Activated CD4-positive, alpha-beta T cell treated with anti-CD3 and anti-CD28 coated beads, Interleukin-2, amount 10 ng/mL, durations not matched to agents 24 days and 14 days (primary cell): ENCODE measurements at regions of chr7 and their contacts with region 1.

Region 1: GRCh38 chr7:92809397-92810241 is 26.8 kb downstream of the CDK6 start:
- DNase-seq: peak; percentile 91
- H3K4me3 Mint-ChIP-seq: peak overlapping the region; percentile 73
- H3K27ac Mint-ChIP-seq: peak overlapping the region; percentile 90
- H3K4me1 Mint-ChIP-seq: peaks cover 75% of the 10 kb centered on the region
- H3K27me3 Mint-ChIP-seq: no peaks in the 10 kb centered on the region

Region 2: DNA sequence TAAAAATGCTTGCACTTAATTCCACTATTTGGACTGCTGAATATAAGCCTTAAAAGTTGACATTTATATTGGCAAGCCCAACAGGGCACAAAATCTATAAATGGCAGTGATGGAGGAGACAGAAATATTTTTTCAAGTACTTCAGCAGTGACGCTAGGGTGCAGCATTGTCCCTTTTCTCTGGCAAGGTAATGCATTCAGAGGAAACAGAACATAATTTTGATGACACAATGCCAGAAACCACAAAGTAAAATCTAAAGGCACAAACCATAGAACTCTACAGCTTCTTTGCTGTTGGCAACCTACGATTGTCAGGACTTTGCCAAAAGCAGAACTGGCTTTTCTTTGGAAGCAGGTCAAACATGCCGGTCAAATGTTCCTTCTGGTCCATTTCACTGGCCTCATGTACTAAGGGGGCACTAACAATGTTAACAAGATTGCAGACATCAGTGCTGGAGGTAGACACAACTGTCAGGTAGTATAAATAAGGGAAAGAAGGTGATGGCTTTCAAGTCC is 188.5 kb before region 1 on chr7:
- intact Hi-C with region 1: loop called (anchors 1 kb)
- DNase-seq: peak; percentile 93
- H3K4me3 Mint-ChIP-seq: peak overlapping the region; percentile 71
- H3K27ac Mint-ChIP-seq: peak overlapping the region; percentile 95
- H3K4me1 Mint-ChIP-seq: peaks cover 46% of the 10 kb centered on the region
- H3K27me3 Mint-ChIP-seq: no peaks in the 10 kb centered on the region

Region 3: GRCh38 chr7:92641921-92642511 is 167.6 kb before region 1 on chr7:
- intact Hi-C with region 1: no loop called
- DNase-seq: peak; percentile 87
- H3K4me3 Mint-ChIP-seq: peak overlapping the region; percentile 77
- H3K27ac Mint-ChIP-seq: peak overlapping the region; percentile 97
- H3K4me1 Mint-ChIP-seq: peaks cover 81% of the 10 kb centered on the region
- H3K27me3 Mint-ChIP-seq: no peaks in the 10 kb centered on the region

Region 4: DNA sequence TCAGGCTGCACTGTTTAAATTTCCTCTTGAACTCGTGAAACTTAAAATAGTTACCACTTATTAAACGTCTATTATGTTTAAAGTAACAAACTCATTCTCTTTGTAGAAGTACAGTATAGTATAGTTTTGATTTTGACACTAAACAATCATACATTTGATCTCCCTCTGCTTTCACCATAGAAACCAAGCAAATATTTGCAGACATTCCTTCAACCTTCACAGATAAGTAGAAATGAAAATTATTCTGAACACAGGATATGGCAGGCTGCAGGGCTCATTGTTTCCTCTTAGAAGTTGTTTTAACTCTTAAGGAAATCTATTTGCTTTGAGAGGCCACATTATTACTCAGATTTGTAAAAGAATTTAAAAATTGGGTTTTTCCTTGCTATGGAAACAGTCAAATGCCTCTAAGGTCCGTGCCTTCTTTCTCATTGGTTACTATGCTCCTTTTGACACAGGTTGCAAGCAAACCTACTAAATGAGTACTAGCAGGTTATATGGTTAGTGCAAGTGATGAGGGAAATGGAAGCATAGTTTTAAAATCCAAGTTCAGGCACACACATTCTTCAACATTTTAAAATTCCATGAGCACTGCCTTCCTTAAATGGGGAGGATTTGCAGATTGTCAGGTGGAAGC is 126.6 kb before region 1 on chr7:
- intact Hi-C with region 1: loop called (anchors 1 kb)
- DNase-seq: peak; percentile 75
- H3K4me3 Mint-ChIP-seq: peak overlapping the region; percentile 47
- H3K27ac Mint-ChIP-seq: peak overlapping the region; percentile 96
- H3K4me1 Mint-ChIP-seq: peaks cover 79% of the 10 kb centered on the region
- H3K27me3 Mint-ChIP-seq: no peaks in the 10 kb centered on the region

Region 5: DNA sequence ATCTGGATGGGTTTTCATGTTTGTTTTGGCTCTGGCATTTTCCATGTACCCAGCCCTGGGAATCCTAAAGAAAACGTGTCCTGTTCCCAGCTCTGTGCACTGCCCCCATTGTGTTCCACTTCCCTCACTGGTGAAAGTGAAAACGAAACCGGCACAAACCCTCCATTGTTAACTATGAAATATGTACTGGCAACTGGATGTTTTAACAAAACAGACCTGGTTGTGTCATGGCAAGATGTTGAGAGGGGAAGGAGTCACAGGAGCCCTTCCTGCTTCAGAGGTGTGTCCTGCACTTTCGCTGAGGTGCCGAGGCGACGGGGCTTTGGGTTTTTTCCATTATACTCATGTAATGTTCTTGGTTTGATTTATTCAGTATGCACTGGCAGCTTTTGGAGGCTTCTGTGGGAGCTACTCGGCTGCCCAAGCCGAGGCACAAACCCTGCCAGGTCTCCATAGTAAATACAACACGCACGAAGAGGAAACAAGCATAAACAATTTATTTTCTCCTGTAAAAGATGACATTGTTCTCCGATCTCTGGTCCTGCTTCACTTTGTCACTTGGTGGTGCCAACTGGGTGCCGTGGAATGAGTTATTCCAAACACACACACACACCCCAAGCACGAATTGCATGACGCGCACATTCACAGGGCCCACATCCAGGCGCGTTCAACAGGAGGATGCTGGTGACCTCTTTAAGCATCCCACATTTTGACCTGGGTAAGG is 91.5 kb before region 1 on chr7:
- intact Hi-C with region 1: loop called (anchors 1 kb)
- DNase-seq: peak; percentile 92
- H3K4me3 Mint-ChIP-seq: peak overlapping the region; percentile 73
- H3K27ac Mint-ChIP-seq: peak overlapping the region; percentile 97
- H3K4me1 Mint-ChIP-seq: peaks cover 52% of the 10 kb centered on the region
- H3K27me3 Mint-ChIP-seq: no peaks in the 10 kb centered on the region

Region 6: DNA sequence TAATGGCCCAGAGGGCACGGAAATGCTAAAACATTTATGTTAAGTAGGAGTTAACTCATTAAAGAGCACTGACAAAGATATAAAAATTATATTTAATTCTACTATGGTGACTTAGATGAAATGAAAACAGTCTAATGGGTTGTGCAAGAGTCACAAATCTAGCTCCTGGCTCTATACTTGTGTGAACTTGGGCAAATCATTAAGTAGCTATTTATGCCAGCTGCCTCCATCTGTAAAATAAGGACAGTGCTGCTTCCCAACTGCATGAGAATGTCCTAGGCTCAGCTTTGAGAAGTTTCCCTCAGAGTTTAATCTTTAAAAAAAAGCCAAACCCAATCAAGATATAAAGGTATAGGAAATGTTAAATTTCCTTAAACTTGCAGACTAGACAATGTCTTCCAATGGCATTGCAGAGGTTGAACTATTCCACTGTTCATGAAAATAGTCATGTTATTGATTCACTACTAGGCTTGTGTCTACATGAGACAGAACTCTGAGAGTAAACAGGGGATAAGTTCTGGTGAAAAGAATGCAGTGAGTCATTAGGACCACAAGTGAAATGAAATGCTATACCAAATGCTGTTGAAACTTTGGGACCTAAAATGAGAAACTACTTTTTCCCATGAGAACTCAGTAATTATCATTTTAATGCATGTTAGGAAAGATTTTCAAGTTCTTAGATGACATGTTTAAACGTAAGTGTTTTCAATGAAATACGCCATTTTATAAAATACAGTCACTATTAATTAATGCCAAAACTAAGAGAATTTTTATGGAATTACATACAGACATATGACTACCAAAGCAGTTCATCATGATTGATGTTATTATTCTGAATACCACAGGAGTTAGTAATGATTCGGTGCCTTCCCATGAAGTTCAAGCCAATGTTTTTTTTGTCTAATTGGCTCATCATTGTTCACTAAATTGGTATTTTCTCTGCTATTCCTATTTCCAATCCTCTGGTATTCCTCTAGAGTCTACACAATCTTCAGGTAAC is 57.4 kb before region 1 on chr7:
- intact Hi-C with region 1: loop called (anchors 1 kb)
- DNase-seq: no peak
- H3K4me3 Mint-ChIP-seq: no peak overlapping the region
- H3K27ac Mint-ChIP-seq: peak overlapping the region; percentile 83
- H3K4me1 Mint-ChIP-seq: peaks cover 64% of the 10 kb centered on the region
- H3K27me3 Mint-ChIP-seq: no peaks in the 10 kb centered on the region

Region 7: DNA sequence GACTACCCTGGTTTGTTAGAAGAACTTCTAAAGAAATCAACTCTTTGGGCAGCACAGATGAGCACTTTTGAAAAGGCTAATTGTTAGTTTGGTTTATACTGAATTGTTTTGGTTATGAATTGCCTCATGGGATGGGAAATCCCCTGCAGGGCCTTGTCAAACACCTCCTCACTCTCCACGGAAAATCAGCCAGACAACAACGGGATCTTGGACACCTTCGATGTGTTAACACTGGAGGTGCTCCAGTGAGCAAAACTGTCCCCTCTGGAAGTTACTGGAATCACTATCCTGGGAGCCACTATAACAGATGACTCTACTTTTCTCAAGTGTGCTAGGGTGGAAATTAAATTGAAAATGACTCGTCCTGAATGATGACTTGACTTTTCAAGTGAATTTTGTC is 11.9 kb before region 1 on chr7:
- intact Hi-C with region 1: loop called (anchors 1 kb)
- DNase-seq: peak; percentile 72
- H3K4me3 Mint-ChIP-seq: no peak overlapping the region
- H3K27ac Mint-ChIP-seq: no peak overlapping the region
- H3K4me1 Mint-ChIP-seq: peaks cover 42% of the 10 kb centered on the region
- H3K27me3 Mint-ChIP-seq: no peaks in the 10 kb centered on the region

Region 8: GRCh38 chr7:92880212-92881090 is 70.8 kb after region 1 on chr7:
- intact Hi-C with region 1: no loop called
- DNase-seq: peak; percentile 64
- H3K4me3 Mint-ChIP-seq: no peak overlapping the region
- H3K27ac Mint-ChIP-seq: no peak overlapping the region
- H3K4me1 Mint-ChIP-seq: peaks cover 39% of the 10 kb centered on the region
- H3K27me3 Mint-ChIP-seq: no peaks in the 10 kb centered on the region